Right ventricle myocardium inferior (tissue), 1 donor: ENCODE measurements at regions of chr12 and their contacts with region 1.

Region 1: DNA sequence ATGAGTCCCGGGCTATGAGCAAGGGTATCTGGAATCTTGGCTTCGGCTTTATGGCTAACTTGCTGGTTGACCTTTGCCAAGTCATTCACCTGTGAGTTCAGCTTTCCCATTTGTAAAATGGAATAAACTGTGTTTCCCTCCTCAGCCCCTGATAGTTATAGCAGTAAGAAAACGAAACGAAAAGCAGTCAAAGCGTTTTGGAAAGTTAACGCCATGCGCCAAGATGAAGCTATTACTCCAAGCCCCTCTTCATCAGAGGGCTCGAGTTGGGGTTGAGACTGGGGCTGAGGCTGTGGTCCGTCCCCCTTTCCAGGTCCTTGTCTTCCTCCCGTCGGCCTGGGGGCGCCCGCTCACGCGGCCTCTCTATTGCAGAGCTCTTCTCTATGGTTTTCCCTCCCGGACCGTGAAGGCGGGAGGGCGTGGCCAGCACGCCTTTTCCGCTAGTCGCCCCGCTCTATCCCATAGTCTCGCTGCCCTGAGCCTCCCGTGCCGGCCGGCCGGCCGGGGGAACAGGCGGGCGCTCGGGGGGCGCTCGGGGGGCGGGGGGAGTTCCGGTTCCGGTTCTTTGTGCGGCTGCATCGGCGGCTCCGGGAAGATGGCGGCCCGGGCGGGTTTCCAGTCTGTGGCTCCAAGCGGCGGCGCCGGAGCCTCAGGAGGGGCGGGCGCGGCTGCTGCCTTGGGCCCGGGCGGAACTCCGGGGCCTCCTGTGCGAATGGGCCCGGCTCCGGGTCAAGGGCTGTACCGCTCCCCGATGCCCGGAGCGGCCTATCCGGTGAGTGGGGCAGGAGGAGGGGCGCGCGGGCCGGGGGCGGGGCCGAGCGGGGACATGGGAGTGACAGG is at the start of gene SMARCD1:
- DNase-seq: peak; percentile 96
- ATAC-seq: peak; percentile 95
- total RNA-seq, gene SMARCD1: 20.1 TPM

Region 2: DNA sequence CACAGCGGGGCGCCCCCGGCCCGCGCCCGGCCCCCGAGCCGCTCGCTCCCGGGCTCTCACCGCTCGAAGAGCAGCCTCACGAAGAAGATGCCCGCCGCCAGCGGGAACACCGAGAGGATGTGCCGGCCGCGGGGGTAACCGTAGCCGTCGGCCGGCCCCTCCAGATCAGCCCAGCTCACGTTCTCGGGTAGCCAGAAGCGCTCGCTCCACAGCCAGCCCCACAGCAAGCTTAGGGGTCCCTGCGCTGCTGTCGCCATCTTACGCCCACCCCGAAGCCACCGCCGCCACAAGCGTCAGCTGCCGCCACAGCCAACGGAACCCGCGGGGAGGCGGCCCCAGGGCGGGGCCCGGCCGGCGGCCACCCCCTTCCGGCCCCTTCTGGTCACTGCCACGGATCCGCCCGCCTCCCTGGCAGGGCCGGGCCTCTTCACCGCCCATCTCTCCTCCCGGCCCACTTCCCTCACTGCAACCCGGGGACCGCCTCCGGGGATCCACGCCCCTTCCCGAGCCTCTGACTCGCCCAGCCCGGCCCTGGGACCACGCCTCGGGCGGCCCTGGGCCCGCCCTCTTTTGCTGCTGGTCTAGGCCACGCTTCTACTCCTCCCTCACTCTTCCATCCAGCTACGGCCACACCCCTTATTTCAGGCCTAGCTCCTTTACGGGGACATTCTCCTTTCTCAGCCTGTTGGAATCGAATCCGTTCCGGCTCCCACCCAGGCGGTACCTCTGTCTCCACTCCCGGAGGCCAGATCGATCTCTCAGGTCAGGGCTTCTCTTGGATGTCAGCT is 82.2 kb after region 1 on chr12 and contains the start of gene CERS5:
- intact Hi-C with region 1: loop called (anchors 2 kb)
- DNase-seq: peak; percentile 99
- ATAC-seq: peak; percentile 100
- total RNA-seq, gene CERS5: 9.6 TPM